AG04449 (cell line): ENCODE measurements at regions of chr1 and their contacts with region 1.

Region 1: GRCh38 chr1:197356723-197357533 is 88.9 kb downstream of the CRB1 start:
- DNase-seq: no peak
- H3K4me3 ChIP-seq: no peak overlapping the region
- CTCF ChIP-seq: peak; percentile 69

Region 2: GRCh38 chr1:197180252-197180878 is 176.6 kb before region 1 on chr1:
- CTCF ChIA-PET with region 1: interaction called, 61 read pairs
- POLR2A ChIA-PET with region 1: no interaction called
- DNase-seq: peak; percentile 59
- H3K4me3 ChIP-seq: no peak overlapping the region
- CTCF ChIP-seq: peak; percentile 49

Region 3: DNA sequence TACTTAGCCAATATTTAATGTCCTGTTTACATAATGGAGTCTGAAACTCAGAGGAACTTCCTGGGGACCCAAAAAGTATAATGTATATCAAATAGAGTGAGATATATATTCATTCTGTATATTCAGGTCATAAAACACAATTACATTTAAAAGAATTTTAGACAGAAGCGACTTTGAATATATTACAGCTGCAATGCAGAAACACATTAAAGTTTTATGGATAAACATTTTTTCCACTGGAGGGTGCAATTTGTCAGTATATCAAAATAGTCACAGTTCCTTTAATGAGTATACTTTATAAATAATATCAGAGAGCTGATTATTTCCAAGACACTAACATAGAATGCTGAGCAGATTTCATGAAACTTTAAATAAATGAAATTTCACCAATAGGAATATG is 132.8 kb before region 1 on chr1:
- CTCF ChIA-PET with region 1: interaction called, 39 read pairs
- POLR2A ChIA-PET with region 1: no interaction called
- DNase-seq: no peak
- H3K4me3 ChIP-seq: no peak overlapping the region
- CTCF ChIP-seq: no peak

Region 4: DNA sequence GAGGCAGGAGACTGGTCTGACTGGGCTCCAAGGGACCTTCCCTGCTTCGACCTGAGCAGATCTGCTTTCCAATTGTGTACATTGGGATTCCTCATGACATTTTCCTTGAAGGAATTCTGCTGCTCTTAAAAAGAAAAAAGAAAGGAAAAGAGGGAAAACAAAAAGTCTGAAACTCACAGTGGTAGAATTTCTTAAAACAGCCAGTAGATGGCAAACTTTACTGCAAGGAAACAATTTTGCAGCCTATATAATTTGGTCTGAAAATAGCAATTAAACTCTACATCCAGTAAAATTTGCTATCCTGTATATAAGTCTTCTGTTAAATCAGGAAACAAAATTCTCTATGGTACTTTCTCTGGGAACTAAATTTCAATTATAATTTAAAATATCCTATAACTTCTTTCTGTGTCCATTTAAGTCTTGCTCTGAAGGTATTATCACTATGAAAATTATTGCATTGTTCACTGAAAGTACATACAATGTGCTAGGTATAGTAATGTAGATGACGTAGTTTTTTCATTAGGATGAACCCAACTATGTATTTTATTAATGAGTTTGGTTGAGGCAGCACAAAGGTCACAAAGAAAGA is 29.1 kb before region 1 on chr1:
- CTCF ChIA-PET with region 1: interaction called, 18 read pairs
- POLR2A ChIA-PET with region 1: no interaction called
- DNase-seq: no peak
- H3K4me3 ChIP-seq: no peak overlapping the region
- CTCF ChIP-seq: peak; percentile 17

Region 5: GRCh38 chr1:197336571-197336970 is 20.4 kb before region 1 on chr1:
- CTCF ChIA-PET with region 1: interaction called, 16 read pairs
- POLR2A ChIA-PET with region 1: no interaction called
- DNase-seq: no peak
- H3K4me3 ChIP-seq: no peak overlapping the region
- CTCF ChIP-seq: no peak

Region 6: DNA sequence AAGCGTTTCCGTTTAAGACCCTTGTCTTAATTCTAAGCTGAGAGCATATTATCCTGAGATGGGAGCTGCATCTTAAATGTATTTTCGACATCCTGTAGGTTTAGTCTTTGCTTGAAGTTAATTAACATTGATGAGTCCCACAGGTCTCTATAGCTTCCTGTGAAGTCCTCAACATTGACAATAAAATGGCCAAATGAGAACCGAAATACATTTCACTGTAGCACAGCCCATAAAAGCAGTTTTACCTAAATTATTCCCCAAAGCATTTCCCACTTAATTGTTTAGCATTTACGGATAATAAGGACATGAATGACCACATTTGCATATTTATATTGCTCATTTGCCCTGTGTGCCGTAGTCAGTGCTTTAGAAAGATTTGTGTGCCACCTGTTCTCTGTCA is 27.5 kb after region 1 on chr1:
- CTCF ChIA-PET with region 1: interaction called, 12 read pairs
- POLR2A ChIA-PET with region 1: no interaction called
- DNase-seq: no peak
- H3K4me3 ChIP-seq: no peak overlapping the region
- CTCF ChIP-seq: no peak

Region 7: GRCh38 chr1:197441990-197442389 is 85.1 kb after region 1 on chr1:
- CTCF ChIA-PET with region 1: no interaction called
- POLR2A ChIA-PET with region 1: no interaction called
- DNase-seq: peak; percentile 42
- H3K4me3 ChIP-seq: no peak overlapping the region
- CTCF ChIP-seq: no peak